Activated CD4-positive, alpha-beta memory T cell treated with anti-CD3 and anti-CD28 coated beads for 36 hours (primary cell): ENCODE measurements at regions of chr19 and their contacts with region 1.

Region 1: GRCh38 chr19:54390942-54391577 is 24.2 kb upstream of the TTYH1 start:
- DNase-seq: peak; percentile 60
- H3K4me3 Mint-ChIP-seq: no peak overlapping the region
- H3K27ac Mint-ChIP-seq: no peak overlapping the region
- H3K4me1 Mint-ChIP-seq: peaks cover 32% of the 10 kb centered on the region
- H3K27me3 Mint-ChIP-seq: peaks cover 15% of the 10 kb centered on the region

Region 2: GRCh38 chr19:54248016-54248601 is 143.0 kb before region 1 on chr19:
- CTCF ChIA-PET with region 1: no interaction called
- POLR2A ChIA-PET with region 1: no interaction called
- intact Hi-C with region 1: loop called (anchors 10 kb)
- DNase-seq: peak; percentile 78
- H3K4me3 Mint-ChIP-seq: no peak overlapping the region
- H3K27ac Mint-ChIP-seq: no peak overlapping the region
- H3K4me1 Mint-ChIP-seq: peaks cover 20% of the 10 kb centered on the region
- H3K27me3 Mint-ChIP-seq: peaks cover 10% of the 10 kb centered on the region

Region 3: GRCh38 chr19:54316746-54317107 is 74.3 kb before region 1 on chr19:
- CTCF ChIA-PET with region 1: interaction called, 19 read pairs
- POLR2A ChIA-PET with region 1: no interaction called
- intact Hi-C with region 1: no loop called
- DNase-seq: no peak
- H3K4me3 Mint-ChIP-seq: no peak overlapping the region
- H3K27ac Mint-ChIP-seq: no peak overlapping the region
- H3K4me1 Mint-ChIP-seq: no peaks in the 10 kb centered on the region
- H3K27me3 Mint-ChIP-seq: peaks cover 36% of the 10 kb centered on the region

Region 4: DNA sequence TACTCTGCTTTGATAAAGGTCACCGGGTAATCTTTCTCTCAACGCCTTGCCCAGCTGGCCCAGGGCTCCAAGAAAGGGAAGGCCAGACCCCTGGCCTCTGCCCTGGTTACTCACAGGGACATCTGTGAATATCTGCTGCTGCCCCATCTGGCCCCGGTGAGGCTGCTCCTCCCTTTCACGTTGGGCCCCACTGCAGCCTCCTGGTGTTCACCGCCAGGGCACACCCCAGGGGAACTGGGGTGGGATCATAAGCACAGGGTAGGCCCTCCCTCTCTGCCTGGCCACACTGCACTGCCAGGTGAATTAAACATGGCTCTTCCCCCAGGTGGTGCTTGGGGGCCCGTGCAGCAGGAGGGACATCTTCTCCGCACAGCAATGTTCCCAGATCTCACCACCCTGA is 39.0 kb before region 1 on chr19:
- CTCF ChIA-PET with region 1: interaction called, 29 read pairs
- POLR2A ChIA-PET with region 1: no interaction called
- intact Hi-C with region 1: loop called (anchors 5 kb)
- DNase-seq: no peak
- H3K4me3 Mint-ChIP-seq: no peak overlapping the region
- H3K27ac Mint-ChIP-seq: no peak overlapping the region
- H3K4me1 Mint-ChIP-seq: no peaks in the 10 kb centered on the region
- H3K27me3 Mint-ChIP-seq: peaks cover 8% of the 10 kb centered on the region

Region 5: DNA sequence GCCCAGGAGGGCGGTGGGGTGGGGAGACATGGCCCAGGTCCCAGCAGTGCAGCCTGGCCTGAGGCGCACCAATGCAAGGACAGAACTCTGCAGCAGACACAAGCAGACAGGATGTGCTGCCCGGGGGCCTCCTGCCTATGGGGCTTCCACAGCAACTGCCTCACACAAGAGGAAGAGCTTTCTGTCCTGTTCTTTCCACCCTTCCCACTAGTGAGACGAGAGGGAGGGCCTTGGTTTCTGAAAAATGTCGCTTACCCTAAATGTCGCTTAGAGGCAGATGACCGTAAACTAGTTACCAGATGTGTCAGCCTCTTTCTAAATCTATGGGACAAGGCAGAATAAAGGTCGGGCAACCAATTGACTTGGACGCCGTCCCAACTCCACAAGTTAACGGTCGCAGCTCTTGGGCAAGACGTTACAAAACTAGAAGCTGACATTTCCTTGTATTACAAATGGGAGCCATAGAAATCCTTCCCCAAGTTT is 26.2 kb before region 1 on chr19 and contains the start of gene LAIR1:
- CTCF ChIA-PET with region 1: interaction called, 27 read pairs
- POLR2A ChIA-PET with region 1: interaction called, 6 read pairs
- intact Hi-C with region 1: loop called (anchors 1 kb)
- DNase-seq: peak; percentile 70
- H3K4me3 Mint-ChIP-seq: peak within 1 kb of the TSS; percentile 78
- H3K27ac Mint-ChIP-seq: peak within 1 kb of the TSS; percentile 84
- H3K4me1 Mint-ChIP-seq: peaks cover 72% of the 10 kb centered on the region
- H3K27me3 Mint-ChIP-seq: peaks cover 7% of the 10 kb centered on the region
- total RNA-seq, gene LAIR1: 4.9 to 5.7 TPM

Region 6: GRCh38 chr19:54379187-54379678 is 11.8 kb before region 1 on chr19:
- CTCF ChIA-PET with region 1: interaction called, 16 read pairs
- POLR2A ChIA-PET with region 1: interaction called, 4 read pairs
- intact Hi-C with region 1: no loop called
- DNase-seq: no peak
- H3K4me3 Mint-ChIP-seq: no peak overlapping the region
- H3K27ac Mint-ChIP-seq: no peak overlapping the region
- H3K4me1 Mint-ChIP-seq: peaks cover 49% of the 10 kb centered on the region
- H3K27me3 Mint-ChIP-seq: peaks cover 11% of the 10 kb centered on the region